Activated T-helper 2 cell treated with anti-CD3 and anti-CD28 coated beads, Interferon-gamma antibody, Interleukin-2, Interleukin-4, amounts not matched to agents 10 μg/mL and 5 μg/mL and 100 μg/mL, durations not matched to agents 14 hours and 24 hours and 36 hours (primary cell): ENCODE measurements at regions of chr6 and their contacts with region 1.

Region 1: DNA sequence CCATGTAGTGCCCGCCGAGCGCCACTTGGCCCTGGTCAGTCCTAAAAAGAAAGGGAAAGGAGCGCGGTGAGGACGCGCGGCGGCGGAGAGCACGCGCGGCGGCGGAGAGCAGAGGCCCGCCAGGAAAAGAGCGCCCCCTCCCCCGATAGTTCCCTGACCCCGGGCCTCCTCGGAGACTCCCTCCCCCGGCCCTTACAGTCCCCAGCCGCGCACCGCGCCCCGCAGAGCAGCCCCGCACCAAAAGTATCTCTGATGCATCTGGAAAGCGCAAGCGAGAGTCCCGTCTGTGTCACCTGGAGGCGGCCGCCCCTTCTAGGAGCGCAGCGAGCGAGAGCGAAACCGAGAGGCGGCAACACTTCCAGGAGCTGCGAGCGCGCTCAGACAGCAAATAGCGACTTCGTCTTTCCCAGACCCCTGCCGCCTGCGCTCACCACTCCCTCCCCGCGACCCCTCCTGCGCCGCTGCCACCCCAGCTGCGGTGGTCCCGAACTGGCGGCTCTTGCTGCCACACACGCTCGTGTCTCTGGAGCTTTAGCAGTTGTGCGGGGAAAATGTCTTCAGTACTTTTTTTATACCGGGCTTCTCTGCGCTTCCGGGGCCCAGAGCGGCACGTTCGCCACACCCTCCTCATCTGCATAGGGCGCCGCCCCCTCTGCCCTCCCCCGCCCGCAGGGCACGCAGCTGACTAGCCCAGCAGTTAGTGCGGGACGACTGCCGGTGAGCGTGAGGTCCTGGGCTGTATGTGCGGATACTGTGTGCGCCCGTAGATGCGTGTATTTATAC is at the start of gene TENT5A:
- DNase-seq: peak; percentile 82
- H3K4me3 Mint-ChIP-seq: peak within 1 kb of the TSS; percentile 82
- H3K27ac Mint-ChIP-seq: peak within 1 kb of the TSS; percentile 34
- H3K4me1 Mint-ChIP-seq: peaks cover 21% of the 10 kb centered on the region
- H3K27me3 Mint-ChIP-seq: peaks cover 56% of the 10 kb centered on the region
- total RNA-seq, gene TENT5A: 0.50 and 0.53 TPM in 2 replicates

Region 2: DNA sequence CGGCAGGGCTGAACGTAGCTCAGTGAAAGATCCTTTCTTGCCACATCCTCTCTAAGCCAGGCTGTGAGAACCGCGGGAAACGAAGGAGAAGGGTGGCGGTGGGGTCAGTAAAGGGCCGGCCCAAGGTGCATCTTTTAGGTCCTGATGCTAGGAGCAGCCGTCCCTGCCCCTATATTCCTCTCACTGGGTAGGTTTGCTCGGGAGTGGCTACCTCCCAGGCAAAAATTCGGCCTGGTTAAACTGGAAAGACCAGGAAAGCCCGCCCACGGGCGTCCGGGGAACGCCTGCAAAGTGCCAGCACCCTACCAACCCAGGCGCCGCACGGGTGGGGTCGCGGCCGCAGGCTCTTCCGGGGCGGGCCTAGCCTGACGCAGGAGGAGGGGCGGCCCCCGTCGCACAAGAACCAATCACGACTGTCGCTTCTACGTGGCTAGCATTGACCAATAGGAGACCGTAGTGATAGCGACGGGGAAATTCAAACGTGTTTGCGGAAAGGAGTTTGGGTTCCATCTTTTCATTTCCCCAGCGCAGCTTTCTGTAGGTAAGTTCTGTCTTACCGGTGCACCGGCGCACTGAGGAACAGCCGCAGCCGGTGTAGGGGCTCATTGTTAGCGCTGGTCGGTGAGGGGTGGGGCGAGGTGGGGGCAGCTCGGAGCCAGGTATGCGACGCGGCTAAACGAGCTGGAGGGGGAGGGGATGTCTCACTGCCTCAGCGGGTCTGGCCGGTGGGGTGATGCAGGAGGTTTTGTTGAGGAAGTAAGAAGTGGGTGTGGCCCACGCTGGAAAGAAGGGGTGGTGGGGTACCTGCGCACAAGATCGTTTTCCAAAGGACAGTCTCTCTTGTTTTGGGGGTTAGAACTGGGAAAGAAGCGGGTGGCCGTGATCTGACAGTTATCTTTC is 1747.9 kb before region 1 on chr6 and contains the start of gene TTK:
- intact Hi-C with region 1: loop called (anchors 1 kb)
- DNase-seq: peak; percentile 92
- H3K4me3 Mint-ChIP-seq: peak within 1 kb of the TSS; percentile 92
- H3K27ac Mint-ChIP-seq: peak within 1 kb of the TSS; percentile 94
- H3K4me1 Mint-ChIP-seq: peaks cover 42% of the 10 kb centered on the region
- H3K27me3 Mint-ChIP-seq: peaks cover 8% of the 10 kb centered on the region
- total RNA-seq, gene TTK: 25.5 and 26.2 TPM in 2 replicates

Region 3: GRCh38 chr6:80338201-80338836 is 1414.0 kb before region 1 on chr6:
- intact Hi-C with region 1: loop called (anchors 2 kb)
- DNase-seq: peak; percentile 33
- H3K4me3 Mint-ChIP-seq: no peak overlapping the region
- H3K27ac Mint-ChIP-seq: no peak overlapping the region
- H3K4me1 Mint-ChIP-seq: peaks cover 4% of the 10 kb centered on the region
- H3K27me3 Mint-ChIP-seq: no peaks in the 10 kb centered on the region

Region 4: DNA sequence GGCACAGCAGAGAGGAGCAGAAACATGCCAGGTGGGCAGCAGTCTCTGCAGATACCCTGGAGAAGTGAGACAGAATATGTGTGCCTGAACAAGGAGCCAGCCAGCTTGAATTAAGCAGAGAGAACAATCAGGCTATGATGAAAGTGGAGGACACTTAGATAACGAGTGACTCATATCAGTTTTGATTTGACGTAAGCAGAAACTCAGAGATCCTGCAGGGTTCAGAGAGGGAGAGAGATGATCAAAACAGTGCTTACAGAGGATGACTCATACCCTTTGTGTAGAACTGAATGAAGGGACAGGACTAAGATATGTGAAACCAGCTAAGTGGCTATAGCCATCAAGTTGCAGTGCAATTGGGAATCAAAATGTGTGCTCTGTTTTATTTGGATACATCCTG is 300.5 kb before region 1 on chr6:
- intact Hi-C with region 1: loop called (anchors 5 kb)
- DNase-seq: no peak
- H3K4me3 Mint-ChIP-seq: no peak overlapping the region
- H3K27ac Mint-ChIP-seq: no peak overlapping the region
- H3K4me1 Mint-ChIP-seq: no peaks in the 10 kb centered on the region
- H3K27me3 Mint-ChIP-seq: no peaks in the 10 kb centered on the region

Region 5: DNA sequence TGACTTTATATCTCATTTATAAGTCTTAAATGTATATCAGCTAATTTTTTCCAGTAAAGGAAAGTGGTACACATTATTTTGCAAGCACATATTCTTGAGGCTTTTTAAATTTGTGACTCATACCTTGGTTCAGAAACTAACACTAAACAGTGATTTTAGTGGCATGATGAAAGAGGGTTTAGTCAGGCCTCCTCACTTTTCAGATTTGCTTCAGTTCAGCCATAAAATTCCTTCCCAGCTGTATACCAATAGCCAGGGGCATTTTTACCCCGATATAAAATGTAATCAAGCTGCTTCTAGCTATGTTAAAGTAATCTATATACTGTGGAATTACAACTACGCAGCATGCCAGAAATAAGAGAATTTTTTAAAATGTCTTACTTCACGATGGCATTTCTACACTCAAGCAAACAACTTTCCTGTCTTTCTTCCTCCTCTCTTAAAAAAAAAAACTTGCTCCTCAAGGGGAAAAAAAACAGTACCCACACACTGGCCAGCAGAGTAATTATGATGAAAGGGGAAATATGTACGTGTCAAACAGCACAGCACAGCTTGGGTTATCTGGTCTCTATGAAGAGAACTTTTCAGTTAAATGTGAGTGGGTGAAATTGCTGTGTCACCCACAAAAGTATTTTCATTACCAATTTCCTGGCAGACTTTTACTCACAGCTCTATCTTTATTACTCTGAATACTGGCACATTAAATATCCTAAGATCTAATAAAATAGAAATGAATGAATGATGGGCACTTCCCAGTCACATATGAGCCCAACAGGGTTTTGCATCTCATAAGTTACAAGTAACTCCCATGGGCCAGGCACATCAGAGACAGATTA is 245.0 kb after region 1 on chr6:
- intact Hi-C with region 1: loop called (anchors 5 kb)
- DNase-seq: no peak
- H3K4me3 Mint-ChIP-seq: no peak overlapping the region
- H3K27ac Mint-ChIP-seq: no peak overlapping the region
- H3K4me1 Mint-ChIP-seq: peaks cover 11% of the 10 kb centered on the region
- H3K27me3 Mint-ChIP-seq: peaks cover 3% of the 10 kb centered on the region

Region 6: GRCh38 chr6:83067448-83068413 is 1315.4 kb after region 1 on chr6 and contains the start of gene DOP1A:
- intact Hi-C with region 1: loop called (anchors 10 kb)
- DNase-seq: peak; percentile 92
- H3K4me3 Mint-ChIP-seq: peak within 1 kb of the TSS; percentile 86
- H3K27ac Mint-ChIP-seq: peak within 1 kb of the TSS; percentile 65
- H3K4me1 Mint-ChIP-seq: peaks cover 31% of the 10 kb centered on the region
- H3K27me3 Mint-ChIP-seq: no peaks in the 10 kb centered on the region
- total RNA-seq, gene DOP1A: 6.5 and 7.5 TPM in 2 replicates